ENCODE measurements at regions of chr22 and their contacts with region 1.

Region 1: DNA sequence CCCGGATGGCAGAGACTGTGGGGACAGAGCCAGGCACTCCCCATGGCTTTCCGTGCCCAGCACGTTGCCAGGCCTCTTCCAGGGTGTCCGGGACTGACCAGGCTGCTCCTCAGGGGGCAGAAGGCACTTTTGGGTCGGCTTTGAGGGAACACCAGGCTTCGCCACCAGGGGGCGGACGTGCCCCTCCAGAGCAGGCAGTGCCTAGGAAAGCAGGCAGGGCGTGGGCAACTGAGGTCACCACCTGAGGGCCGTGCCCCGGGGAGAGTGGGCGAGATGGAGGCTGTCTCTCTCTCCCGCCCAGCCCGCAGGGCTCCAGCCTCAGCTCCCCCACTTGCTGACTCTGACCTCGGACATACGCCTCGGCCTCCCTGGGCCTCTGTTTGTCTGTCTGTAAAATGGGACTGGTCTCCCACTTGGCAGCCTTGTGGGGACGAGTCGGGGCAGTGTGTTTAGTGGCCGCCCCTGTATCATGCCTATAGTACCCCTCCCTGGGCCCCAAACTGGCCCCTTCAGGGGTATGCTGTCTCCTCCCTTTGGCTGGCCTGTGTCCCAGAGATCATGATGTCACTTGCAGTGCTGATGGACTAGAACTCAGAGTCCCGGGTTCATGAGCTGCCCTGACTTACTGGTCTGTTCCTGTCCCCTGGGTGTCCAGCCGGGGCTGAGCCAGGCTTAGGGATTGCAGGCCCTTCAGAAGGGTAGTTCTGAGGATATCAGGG is 4.4 kb upstream of the PRR5 start:
- DNase-seq: peak; percentile 88
- H3K4me3 ChIP-seq: no peak overlapping the region
- H3K27ac ChIP-seq: peak overlapping the region in 3 of 4 donors; percentile 9 to 61 (median 48)
- H3K4me1 ChIP-seq: peaks cover 6 to 8% (median 7%) of the 10 kb centered on the region in 4 donors
- H3K27me3 ChIP-seq: no peaks in the 10 kb centered on the region
- CTCF ChIP-seq: peak; percentile 91 to 97 (median 95)
- EP300 ChIP-seq: no peak
- POLR2A ChIP-seq: no peak

Region 2: GRCh38 chr22:44729391-44730021 is 31.9 kb after region 1 on chr22:
- in situ Hi-C with region 1: loop called in 1 of 4 experiments (anchors 5 kb)
- intact Hi-C with region 1: loop called (anchors 2 kb)
- DNase-seq: no peak
- H3K4me3 ChIP-seq: peak overlapping the region in 1 of 4 donors; percentile 6
- H3K27ac ChIP-seq: peak overlapping the region; percentile 45 to 72 (median 60)
- H3K4me1 ChIP-seq: peaks cover 0 to 17% (median 6%) of the 10 kb centered on the region in 4 donors
- H3K27me3 ChIP-seq: no peaks in the 10 kb centered on the region
- CTCF ChIP-seq: peak in 1 of 5 experiments; percentile 12
- EP300 ChIP-seq: no peak
- POLR2A ChIP-seq: no peak

Region 3: GRCh38 chr22:44735540-44736488 is 38.2 kb after region 1 on chr22:
- in situ Hi-C with region 1: loop called in 2 of 4 experiments (anchors 5 kb)
- intact Hi-C with region 1: loop called (anchors 2 kb)
- DNase-seq: peak; percentile 84
- H3K4me3 ChIP-seq: no peak overlapping the region
- H3K27ac ChIP-seq: no peak overlapping the region
- H3K4me1 ChIP-seq: peaks cover 0 to 10% (median 8%) of the 10 kb centered on the region in 4 donors
- H3K27me3 ChIP-seq: peaks cover 6% of the 10 kb centered on the region
- CTCF ChIP-seq: peak; percentile 99 to 100 (median 99)
- EP300 ChIP-seq: no peak
- POLR2A ChIP-seq: no peak